ENCODE measurements at regions of chr19 and their contacts with region 1.

Region 1: DNA sequence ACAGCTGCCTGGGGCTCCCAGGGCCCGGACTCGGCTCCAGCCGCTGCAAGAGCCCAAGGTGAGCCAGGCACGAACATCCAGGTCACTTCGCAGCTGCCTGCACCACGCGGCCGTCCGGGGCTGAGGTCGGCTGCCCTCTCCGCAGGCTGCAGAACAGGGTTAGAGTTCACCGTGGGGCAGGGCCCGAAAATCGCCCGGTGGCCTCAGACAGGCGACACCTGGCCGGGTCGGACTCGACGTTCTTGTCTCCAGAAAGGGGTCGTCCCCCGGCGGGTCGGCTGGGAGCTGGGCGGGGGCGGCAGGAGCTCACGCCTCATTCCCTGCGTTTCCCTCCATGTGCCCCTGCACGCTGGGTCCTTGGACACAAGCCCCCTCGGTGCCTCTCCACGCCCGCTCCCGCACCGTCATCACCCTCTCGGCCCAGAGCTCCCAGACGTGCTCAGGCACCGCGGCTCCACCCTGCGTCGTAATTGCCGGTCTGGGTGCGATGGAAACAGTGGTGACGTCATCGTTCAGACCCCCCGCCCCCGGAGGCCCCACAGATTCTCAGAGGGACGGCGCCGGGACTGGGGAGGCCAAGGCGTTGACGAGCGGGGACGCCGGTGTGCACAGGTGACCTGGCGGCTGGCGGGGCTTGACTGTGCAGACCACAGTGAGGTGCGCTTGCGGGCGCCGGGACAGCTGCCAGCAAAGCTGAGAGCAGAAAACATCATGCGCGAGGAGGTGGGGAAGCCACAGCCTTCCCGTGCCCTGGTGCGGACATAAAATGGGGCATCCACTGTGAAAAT is 4.0 kb upstream of the GRIN3B start:
- DNase-seq: peak; percentile 59 to 93 (median 73)
- ATAC-seq: peak; percentile 84
- H3K4me3 ChIP-seq: no peak overlapping the region
- H3K4me3 Mint-ChIP-seq: peak overlapping the region; percentile 25 to 82 (median 64)
- H3K27ac ChIP-seq: peak overlapping the region; percentile 38
- H3K27ac Mint-ChIP-seq: peak overlapping the region in 8 of 9 donors; percentile 31 to 96 (median 76)
- H3K4me1 ChIP-seq: peaks cover 17 to 20% of the 10 kb centered on the region in 2 donors
- H3K4me1 Mint-ChIP-seq: peaks cover 6 to 15% (median 10%) of the 10 kb centered on the region in 7 donors
- H3K27me3 ChIP-seq: peaks cover 2% of the 10 kb centered on the region in 2 donors
- H3K27me3 Mint-ChIP-seq: peaks cover 7 to 36% (median 16%) of the 10 kb centered on the region in 5 donors

Region 2: GRCh38 chr19:771332-771785 is 224.9 kb before region 1 on chr19:
- CTCF ChIA-PET with region 1: no interaction called
- POLR2A ChIA-PET with region 1: no interaction called
- intact Hi-C with region 1: loop called in 1 of 2 experiments (anchors 5 kb)
- DNase-seq: no peak
- ATAC-seq: peak; percentile 67
- H3K4me3 ChIP-seq: no peak overlapping the region
- H3K4me3 Mint-ChIP-seq: no peak overlapping the region
- H3K27ac ChIP-seq: no peak overlapping the region
- H3K27ac Mint-ChIP-seq: no peak overlapping the region
- H3K4me1 ChIP-seq: no peaks in the 10 kb centered on the region
- H3K4me1 Mint-ChIP-seq: peaks cover 0 to 4% (median 0%) of the 10 kb centered on the region in 7 donors
- H3K27me3 ChIP-seq: no peaks in the 10 kb centered on the region
- H3K27me3 Mint-ChIP-seq: peaks cover 0 to 8% (median 4%) of the 10 kb centered on the region in 5 donors

Region 3: DNA sequence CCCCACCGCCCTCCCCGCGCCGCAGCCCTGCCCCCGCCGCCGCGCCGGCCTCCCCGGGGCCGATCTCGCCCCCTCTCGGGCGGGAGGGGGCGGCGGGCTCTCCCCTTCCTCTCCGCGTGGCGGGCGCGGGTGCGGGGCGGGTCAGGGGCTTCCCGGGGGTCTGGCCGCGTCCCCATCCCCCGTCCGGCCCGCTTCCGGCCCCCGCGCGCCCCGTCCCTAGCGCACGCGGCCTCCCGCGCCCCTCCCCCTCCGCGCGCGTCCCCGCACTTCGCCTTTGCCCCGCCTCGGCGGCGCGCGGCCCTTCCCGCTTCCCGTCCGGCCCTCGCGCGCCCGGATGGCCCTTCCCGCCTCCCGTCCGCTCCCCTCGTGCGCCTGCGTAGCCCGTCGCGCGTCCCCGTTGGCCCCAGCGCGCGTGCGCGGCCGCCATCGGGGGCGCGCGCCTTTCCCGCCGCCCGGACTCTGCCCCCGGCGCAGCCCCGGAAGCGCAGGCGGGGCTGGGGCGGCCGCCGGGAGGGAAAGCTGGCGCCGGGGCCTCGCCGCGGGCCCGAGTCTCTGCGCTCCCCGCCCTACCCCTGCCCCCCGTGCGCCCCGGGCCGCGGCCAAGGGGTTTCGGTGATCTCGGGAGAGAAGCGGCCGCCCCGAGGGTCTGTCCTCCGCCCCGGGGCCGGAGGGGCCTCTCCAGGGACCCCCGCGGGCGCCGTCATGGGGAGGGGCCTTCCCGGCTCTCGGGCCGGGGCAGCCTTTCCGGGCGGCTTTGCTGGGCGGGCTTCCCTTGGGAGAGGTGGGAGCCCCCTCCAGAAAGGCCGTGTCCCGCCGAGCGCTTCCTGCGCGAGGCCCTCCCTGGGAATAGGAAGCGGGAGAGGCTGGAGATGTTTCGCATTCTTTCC is 198.5 kb before region 1 on chr19:
- CTCF ChIA-PET with region 1: no interaction called
- POLR2A ChIA-PET with region 1: no interaction called
- intact Hi-C with region 1: no loop called
- DNase-seq: peak; percentile 78 to 96 (median 89)
- ATAC-seq: peak; percentile 46
- H3K4me3 ChIP-seq: peak overlapping the region; percentile 78
- H3K4me3 Mint-ChIP-seq: peak overlapping the region; percentile 86 to 96 (median 92)
- H3K27ac ChIP-seq: peak overlapping the region; percentile 78
- H3K27ac Mint-ChIP-seq: peak overlapping the region; percentile 85 to 97 (median 92)
- H3K4me1 ChIP-seq: peaks cover 37 to 39% of the 10 kb centered on the region in 2 donors
- H3K4me1 Mint-ChIP-seq: peaks cover 33 to 44% (median 39%) of the 10 kb centered on the region in 7 donors
- H3K27me3 ChIP-seq: no peaks in the 10 kb centered on the region
- H3K27me3 Mint-ChIP-seq: peaks cover 0 to 2% (median 0%) of the 10 kb centered on the region in 5 donors